ENCODE measurements at regions of chr21 and their contacts with region 1.

Region 1: DNA sequence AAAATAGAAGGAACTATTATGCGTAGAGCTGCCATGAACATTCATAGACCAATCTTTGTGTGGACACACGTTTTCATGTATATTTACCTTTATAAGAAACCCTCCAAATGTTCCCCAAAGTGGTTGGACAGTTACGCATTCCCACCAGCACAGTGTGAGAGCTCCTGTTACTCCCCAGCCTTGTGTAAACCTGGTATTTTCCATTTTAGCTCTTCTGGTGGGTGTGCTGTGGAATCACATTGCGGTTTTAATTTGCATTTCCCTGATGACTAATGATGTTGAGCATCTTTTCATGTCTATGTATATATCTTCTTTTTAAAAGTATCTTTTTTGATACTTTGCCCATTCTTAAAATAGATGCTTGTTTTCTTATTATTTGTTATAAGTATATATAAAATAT is 3.2 kb upstream of the UBASH3A start:
- DNase-seq: no peak
- ATAC-seq: peak; percentile 20
- H3K4me3 Mint-ChIP-seq: peak overlapping the region; percentile 55
- H3K27ac Mint-ChIP-seq: peak overlapping the region; percentile 82
- H3K4me1 Mint-ChIP-seq: peaks cover 53% of the 10 kb centered on the region
- H3K27me3 Mint-ChIP-seq: no peaks in the 10 kb centered on the region
- CTCF ChIP-seq: no peak

Region 2: GRCh38 chr21:42195378-42196031 is 205.0 kb before region 1 on chr21:
- CTCF ChIA-PET with region 1: no interaction called
- POLR2A ChIA-PET with region 1: no interaction called
- intact Hi-C with region 1: no loop called
- DNase-seq: peak; percentile 21
- ATAC-seq: no peak
- H3K4me3 Mint-ChIP-seq: no peak overlapping the region
- H3K27ac Mint-ChIP-seq: no peak overlapping the region
- H3K4me1 Mint-ChIP-seq: peaks cover 60% of the 10 kb centered on the region
- H3K27me3 Mint-ChIP-seq: no peaks in the 10 kb centered on the region
- CTCF ChIP-seq: no peak

Region 3: GRCh38 chr21:42366321-42367009 is 34.1 kb before region 1 on chr21 and contains the start of gene TFF1:
- CTCF ChIA-PET with region 1: interaction called, 8 read pairs
- POLR2A ChIA-PET with region 1: interaction called, 12 read pairs
- intact Hi-C with region 1: no loop called
- DNase-seq: no peak
- ATAC-seq: no peak
- H3K4me3 Mint-ChIP-seq: no peak within 1 kb of the TSS
- H3K27ac Mint-ChIP-seq: peak within 1 kb of the TSS; percentile 32
- H3K4me1 Mint-ChIP-seq: peaks cover 24% of the 10 kb centered on the region
- H3K27me3 Mint-ChIP-seq: no peaks in the 10 kb centered on the region
- CTCF ChIP-seq: no peak
- total RNA-seq, gene TFF1: 1.1 TPM in 1 of 2 experiments, not detected in the other

Region 4: GRCh38 chr21:42414928-42415769 is 14.6 kb after region 1 on chr21:
- CTCF ChIA-PET with region 1: interaction called, 46 read pairs
- POLR2A ChIA-PET with region 1: interaction called, 133 read pairs
- intact Hi-C with region 1: no loop called
- DNase-seq: peak; percentile 99
- ATAC-seq: peak; percentile 80
- H3K4me3 Mint-ChIP-seq: peak overlapping the region; percentile 64
- H3K27ac Mint-ChIP-seq: no peak overlapping the region
- H3K4me1 Mint-ChIP-seq: peaks cover 46% of the 10 kb centered on the region
- H3K27me3 Mint-ChIP-seq: no peaks in the 10 kb centered on the region
- CTCF ChIP-seq: no peak

Region 5: GRCh38 chr21:42440187-42440792 is 39.8 kb after region 1 on chr21:
- CTCF ChIA-PET with region 1: interaction called, 3 read pairs
- POLR2A ChIA-PET with region 1: interaction called, 21 read pairs
- intact Hi-C with region 1: loop called (anchors 5 kb)
- DNase-seq: peak; percentile 85
- ATAC-seq: peak; percentile 67
- H3K4me3 Mint-ChIP-seq: peak overlapping the region; percentile 44
- H3K27ac Mint-ChIP-seq: peak overlapping the region; percentile 94
- H3K4me1 Mint-ChIP-seq: peaks cover 58% of the 10 kb centered on the region
- H3K27me3 Mint-ChIP-seq: peaks cover 2% of the 10 kb centered on the region
- CTCF ChIP-seq: no peak

Region 6: GRCh38 chr21:42474982-42475381 is 74.5 kb after region 1 on chr21:
- CTCF ChIA-PET with region 1: no interaction called
- POLR2A ChIA-PET with region 1: no interaction called
- intact Hi-C with region 1: no loop called
- DNase-seq: no peak
- ATAC-seq: no peak
- H3K4me3 Mint-ChIP-seq: no peak overlapping the region
- H3K27ac Mint-ChIP-seq: no peak overlapping the region
- H3K4me1 Mint-ChIP-seq: no peaks in the 10 kb centered on the region
- H3K27me3 Mint-ChIP-seq: no peaks in the 10 kb centered on the region
- CTCF ChIP-seq: no peak